HepG2 (cell line): ENCODE measurements at regions of chr9 and their contacts with region 1.

Region 1: DNA sequence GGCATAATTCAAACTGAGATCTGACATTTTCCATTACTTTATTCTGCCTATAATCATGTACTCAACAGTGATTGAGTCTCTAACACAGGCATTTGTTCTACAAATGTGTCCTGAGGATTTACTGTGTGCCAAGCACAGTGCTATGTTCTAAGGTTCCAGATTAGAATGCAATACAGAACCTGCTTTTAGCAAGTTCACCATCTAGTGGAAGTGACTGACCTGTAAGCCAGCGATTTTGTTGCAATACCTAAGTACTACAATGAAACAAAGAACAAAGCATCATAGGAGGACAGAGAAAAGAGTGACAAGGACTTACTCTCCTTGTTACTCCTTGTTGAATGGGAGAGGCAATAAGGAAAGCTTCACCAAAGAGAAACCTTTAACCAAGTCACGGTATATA is 348.1 kb downstream of the ELAVL2 start:
- DNase-seq: no peak
- ATAC-seq: no peak
- H3K4me3 ChIP-seq: no peak overlapping the region
- H3K27ac ChIP-seq: no peak overlapping the region
- H3K4me1 ChIP-seq: no peaks in the 10 kb centered on the region
- H3K27me3 ChIP-seq: no peaks in the 10 kb centered on the region
- CTCF ChIP-seq: no peak
- EP300 ChIP-seq: no peak
- POLR2A ChIP-seq: no peak
- RAD21 ChIP-seq: no peak

Region 2: DNA sequence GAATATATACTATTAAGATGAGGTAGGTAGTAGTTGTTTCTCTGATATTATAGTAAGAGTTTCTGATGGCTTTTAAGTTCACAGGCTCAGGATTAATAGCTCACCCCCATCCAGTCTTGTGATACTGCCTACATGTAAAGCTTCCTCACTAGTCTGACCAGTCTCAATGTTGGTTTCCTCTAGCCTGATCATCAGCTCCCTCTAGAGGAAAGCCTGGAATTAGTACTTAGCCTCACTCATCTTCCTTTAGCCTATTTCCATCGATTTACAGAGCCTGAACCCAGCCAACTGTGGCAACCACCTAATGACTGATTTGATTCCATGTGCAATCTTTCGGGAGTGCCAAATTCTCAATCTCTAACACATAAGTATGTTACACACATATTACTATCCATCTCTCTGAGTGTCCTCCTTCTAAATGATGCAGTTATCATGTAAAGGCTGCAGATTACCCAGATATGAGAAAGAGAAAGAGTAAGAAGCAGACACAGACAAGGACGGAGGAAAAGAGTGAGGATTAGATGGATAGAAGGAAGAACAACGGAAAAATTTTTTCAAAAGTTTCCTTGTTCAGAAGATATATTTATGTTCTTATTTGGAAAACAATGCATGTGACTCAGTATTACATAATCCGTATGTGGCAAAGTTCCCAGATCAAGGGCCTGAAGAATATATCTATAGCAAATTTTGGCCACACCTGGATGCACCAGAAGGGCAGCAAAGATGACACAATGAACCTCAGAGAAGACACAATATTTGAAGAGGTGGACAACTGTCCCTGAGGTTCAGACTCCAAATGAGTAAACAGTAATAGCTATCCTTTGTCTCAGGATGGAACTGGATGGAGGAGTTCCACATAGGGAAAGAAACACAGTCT is 14.5 kb after region 1 on chr9:
- CTCF ChIA-PET with region 1: no interaction called
- POLR2A ChIA-PET with region 1: no interaction called
- in situ Hi-C with region 1: no loop called
- intact Hi-C with region 1: loop called (anchors 1 kb)
- DNase-seq: peak; percentile 31
- ATAC-seq: peak; percentile 90
- H3K4me3 ChIP-seq: no peak overlapping the region
- H3K27ac ChIP-seq: no peak overlapping the region
- H3K4me1 ChIP-seq: no peaks in the 10 kb centered on the region
- H3K27me3 ChIP-seq: no peaks in the 10 kb centered on the region
- CTCF ChIP-seq: peak; percentile 63
- EP300 ChIP-seq: no peak
- POLR2A ChIP-seq: no peak
- RAD21 ChIP-seq: no peak

Region 3: DNA sequence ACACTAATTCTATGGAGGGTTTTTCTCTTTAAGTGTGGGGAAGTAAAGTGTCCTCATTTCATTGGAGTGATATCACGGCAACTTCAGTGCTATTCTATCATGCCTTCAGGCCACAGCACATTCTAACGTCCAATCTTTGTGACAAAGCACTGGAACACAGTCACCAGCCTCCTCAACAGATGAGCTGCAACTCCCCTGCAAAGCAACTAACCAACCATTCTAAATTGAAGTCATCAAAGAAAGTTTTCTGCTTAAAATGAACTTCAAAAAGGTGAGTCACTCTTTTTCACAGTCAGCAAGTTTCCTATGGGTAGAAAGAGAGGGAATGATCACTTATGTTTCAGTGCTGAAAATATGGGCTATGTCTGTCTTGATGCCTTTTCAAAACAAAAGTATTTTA is 157.4 kb after region 1 on chr9:
- CTCF ChIA-PET with region 1: no interaction called
- POLR2A ChIA-PET with region 1: no interaction called
- in situ Hi-C with region 1: no loop called
- intact Hi-C with region 1: no loop called
- DNase-seq: no peak
- ATAC-seq: no peak
- H3K4me3 ChIP-seq: no peak overlapping the region
- H3K27ac ChIP-seq: no peak overlapping the region
- H3K4me1 ChIP-seq: no peaks in the 10 kb centered on the region
- H3K27me3 ChIP-seq: no peaks in the 10 kb centered on the region
- CTCF ChIP-seq: no peak
- EP300 ChIP-seq: no peak
- POLR2A ChIP-seq: no peak
- RAD21 ChIP-seq: no peak